Heart left ventricle (tissue), 16 donors: ENCODE measurements at regions of chr6 and their contacts with region 1.

Region 1: DNA sequence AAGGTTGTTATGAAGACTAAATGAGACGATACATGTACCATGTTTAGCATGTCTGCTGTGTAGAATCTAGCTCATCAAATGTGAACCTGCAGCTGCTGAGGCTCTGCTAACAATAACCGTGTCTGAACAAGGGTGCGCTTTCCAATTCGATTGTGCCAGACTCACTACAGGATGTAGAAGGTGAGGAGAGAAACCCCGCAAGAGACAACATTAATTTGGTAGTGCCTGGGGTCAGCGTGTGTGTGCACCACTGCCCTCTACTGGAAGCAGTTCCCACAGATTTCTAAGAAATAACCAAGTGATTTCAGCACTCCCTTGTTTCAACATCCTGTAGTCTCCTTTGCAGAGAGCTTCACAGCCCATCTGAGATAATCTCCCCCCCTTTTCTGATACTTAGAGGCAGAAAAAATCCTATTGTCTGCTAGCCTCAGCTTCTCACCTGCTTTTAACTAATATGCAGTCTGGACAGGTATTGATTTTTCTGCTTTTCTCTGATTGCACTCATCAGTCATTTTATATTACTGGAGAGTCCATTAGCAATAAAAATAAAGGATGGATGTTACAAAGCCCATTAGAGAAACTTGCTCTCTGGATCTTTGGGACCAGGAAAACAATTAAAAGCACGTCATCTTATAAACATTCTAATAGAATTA is 96.7 kb upstream of the BACH2 start:
- DNase-seq: peak in 3 of 5 donors; percentile 43 to 53 (median 51)
- ATAC-seq: peak; percentile 62 to 77 (median 72)
- H3K4me3 ChIP-seq: no peak overlapping the region
- H3K27ac ChIP-seq: no peak overlapping the region
- H3K4me1 ChIP-seq: peaks cover 0 to 11% (median 0%) of the 10 kb centered on the region in 12 donors
- H3K27me3 ChIP-seq: no peaks in the 10 kb centered on the region
- CTCF ChIP-seq: peak; percentile 67 to 84 (median 76)
- POLR2A ChIP-seq: no peak

Region 2: DNA sequence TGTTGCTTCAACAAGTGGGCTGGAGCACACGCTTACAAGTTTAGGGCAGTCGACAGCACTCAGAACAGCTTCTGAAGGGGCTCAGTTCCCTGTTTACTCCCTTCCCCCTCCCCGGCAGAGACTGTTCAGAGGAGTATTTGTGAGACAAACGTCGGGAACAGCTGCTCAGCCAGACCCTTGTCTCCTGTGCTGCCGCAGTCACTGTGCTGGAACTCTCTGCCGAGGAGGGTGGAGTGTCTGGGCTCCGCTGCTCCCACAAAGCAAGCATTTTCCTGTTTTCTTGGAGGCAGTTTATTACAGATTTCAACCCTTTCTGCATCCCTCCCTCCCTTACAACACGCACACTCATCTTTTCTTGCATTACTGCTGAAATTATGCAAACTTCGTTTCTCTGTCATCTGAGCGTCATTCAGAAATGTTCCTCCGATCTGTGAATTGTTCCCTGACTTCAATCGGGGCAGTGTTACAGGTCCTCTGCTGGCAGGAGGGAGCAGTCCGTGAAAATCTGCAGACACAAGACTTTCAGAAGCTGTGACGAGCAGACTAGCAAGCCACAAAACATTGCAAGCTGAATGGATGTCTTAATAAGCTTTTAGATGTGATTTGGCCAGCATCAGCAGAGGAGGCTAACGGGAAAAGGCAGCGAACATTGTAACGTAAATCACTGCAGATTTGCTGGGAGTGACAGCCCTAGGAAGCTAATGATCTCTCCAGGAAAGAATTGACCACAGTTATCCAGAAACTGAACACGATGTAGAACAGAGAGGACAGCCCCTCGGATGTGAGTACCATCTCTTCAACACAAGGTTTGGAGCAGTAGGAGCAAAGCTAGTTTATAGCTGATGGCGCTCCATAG is 831.0 kb before region 1 on chr6:
- intact Hi-C with region 1: no loop called
- DNase-seq: no peak
- ATAC-seq: peak in 2 of 4 donors; percentile 40 to 59
- H3K4me3 ChIP-seq: peak overlapping the region in 9 of 12 donors; percentile 10 to 45 (median 23)
- H3K27ac ChIP-seq: peak overlapping the region in 1 of 12 donors; percentile 9
- H3K4me1 ChIP-seq: peaks cover 0 to 26% (median 4%) of the 10 kb centered on the region in 12 donors
- H3K27me3 ChIP-seq: no peaks in the 10 kb centered on the region
- CTCF ChIP-seq: no peak
- POLR2A ChIP-seq: no peak

Region 3: GRCh38 chr6:89940225-89941027 is 452.9 kb before region 1 on chr6:
- intact Hi-C with region 1: loop called in 4 of 10 experiments (anchors 1 to 10 kb)
- DNase-seq: peak in 4 of 5 donors; percentile 56 to 60 (median 59)
- ATAC-seq: peak; percentile 83 to 92 (median 90)
- H3K4me3 ChIP-seq: no peak overlapping the region
- H3K27ac ChIP-seq: no peak overlapping the region
- H3K4me1 ChIP-seq: peaks cover 0 to 8% (median 0%) of the 10 kb centered on the region in 12 donors
- H3K27me3 ChIP-seq: no peaks in the 10 kb centered on the region
- CTCF ChIP-seq: peak; percentile 46 to 81 (median 70)
- POLR2A ChIP-seq: no peak

Region 4: GRCh38 chr6:90098001-90098531 is 295.3 kb before region 1 on chr6:
- intact Hi-C with region 1: loop called in 4 of 10 experiments (anchors 5 to 10 kb)
- DNase-seq: peak in 4 of 5 donors; percentile 29 to 57 (median 50)
- ATAC-seq: peak; percentile 85 to 94 (median 88)
- H3K4me3 ChIP-seq: no peak overlapping the region
- H3K27ac ChIP-seq: peak overlapping the region in 11 of 12 donors; percentile 44 to 84 (median 68)
- H3K4me1 ChIP-seq: peaks cover 0 to 43% (median 22%) of the 10 kb centered on the region in 12 donors
- H3K27me3 ChIP-seq: no peaks in the 10 kb centered on the region
- CTCF ChIP-seq: peak in 11 of 12 donors; percentile 3 to 66 (median 42)
- POLR2A ChIP-seq: no peak

Region 5: DNA sequence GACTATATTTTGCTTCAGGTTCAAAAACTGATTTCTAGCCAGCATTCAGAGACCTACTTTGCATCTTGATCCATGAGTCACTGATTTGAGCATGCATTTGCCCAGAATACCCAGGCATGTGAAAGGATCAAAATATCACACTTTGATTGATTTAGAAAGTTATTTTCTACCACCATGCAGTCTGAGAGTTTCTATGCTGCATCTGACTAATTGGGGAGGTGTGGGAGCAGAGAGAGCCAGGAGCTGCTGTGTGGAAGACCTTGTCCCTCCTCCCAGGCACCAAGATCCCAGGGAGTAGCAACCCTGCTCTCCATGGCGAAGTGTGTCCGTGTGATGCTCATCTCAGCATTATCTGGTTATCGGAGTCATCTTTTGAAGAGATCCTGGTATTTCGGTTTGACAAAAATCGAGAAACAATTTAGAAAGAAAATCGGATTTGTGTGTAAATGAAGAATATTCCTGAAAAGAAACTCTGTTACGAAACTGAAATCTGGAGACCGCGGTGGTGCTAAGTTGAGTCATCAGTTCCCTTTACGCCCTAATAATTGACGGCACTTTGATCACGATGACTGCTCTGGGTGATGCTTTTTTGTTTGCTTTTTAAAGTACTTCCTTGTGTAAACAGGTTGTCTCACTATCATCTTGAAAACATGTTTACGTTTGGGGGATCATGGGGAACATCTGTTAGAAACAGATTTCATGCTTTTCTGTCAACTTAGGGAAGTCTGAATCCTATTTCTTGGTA is 290.1 kb before region 1 on chr6:
- intact Hi-C with region 1: loop called in 4 of 10 experiments (anchors 5 to 10 kb)
- DNase-seq: no peak
- ATAC-seq: no peak
- H3K4me3 ChIP-seq: peak overlapping the region in 1 of 12 donors; percentile 16
- H3K27ac ChIP-seq: no peak overlapping the region
- H3K4me1 ChIP-seq: peaks cover 0 to 52% (median 4%) of the 10 kb centered on the region in 12 donors
- H3K27me3 ChIP-seq: no peaks in the 10 kb centered on the region
- CTCF ChIP-seq: no peak
- POLR2A ChIP-seq: no peak

Region 6: DNA sequence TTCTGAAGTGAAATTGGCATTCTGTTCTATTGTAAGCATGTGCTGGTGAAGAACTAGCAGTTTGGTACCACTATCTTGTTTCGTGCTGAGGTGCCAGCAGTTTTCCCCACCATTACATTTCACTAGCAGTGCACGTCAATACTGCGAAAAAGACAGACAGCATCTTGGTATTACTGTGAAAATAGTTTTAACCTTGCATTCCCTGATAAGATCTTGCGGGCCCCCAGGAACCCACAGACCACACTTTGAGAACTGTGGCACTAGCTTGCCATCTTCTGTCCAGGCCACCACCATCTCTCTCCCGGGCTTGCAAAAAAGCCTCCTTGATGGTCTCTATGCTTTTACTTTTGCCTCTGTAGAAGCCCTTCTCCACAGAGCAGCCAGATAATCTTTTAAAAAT is 282.4 kb before region 1 on chr6:
- intact Hi-C with region 1: loop called in 4 of 10 experiments (anchors 10 kb)
- DNase-seq: no peak
- ATAC-seq: no peak
- H3K4me3 ChIP-seq: no peak overlapping the region
- H3K27ac ChIP-seq: no peak overlapping the region
- H3K4me1 ChIP-seq: peaks cover 0 to 12% (median 0%) of the 10 kb centered on the region in 12 donors
- H3K27me3 ChIP-seq: no peaks in the 10 kb centered on the region
- CTCF ChIP-seq: no peak
- POLR2A ChIP-seq: no peak

Region 7: GRCh38 chr6:90478789-90479602 is 85.6 kb after region 1 on chr6:
- intact Hi-C with region 1: loop called in 8 of 10 experiments (anchors 1 to 10 kb)
- DNase-seq: peak; percentile 83 to 93 (median 85)
- ATAC-seq: peak; percentile 97 to 100 (median 99)
- H3K4me3 ChIP-seq: no peak overlapping the region
- H3K27ac ChIP-seq: no peak overlapping the region
- H3K4me1 ChIP-seq: peaks cover 0 to 10% (median 2%) of the 10 kb centered on the region in 12 donors
- H3K27me3 ChIP-seq: no peaks in the 10 kb centered on the region
- CTCF ChIP-seq: peak; percentile 86 to 97 (median 92)
- POLR2A ChIP-seq: no peak

Region 8: DNA sequence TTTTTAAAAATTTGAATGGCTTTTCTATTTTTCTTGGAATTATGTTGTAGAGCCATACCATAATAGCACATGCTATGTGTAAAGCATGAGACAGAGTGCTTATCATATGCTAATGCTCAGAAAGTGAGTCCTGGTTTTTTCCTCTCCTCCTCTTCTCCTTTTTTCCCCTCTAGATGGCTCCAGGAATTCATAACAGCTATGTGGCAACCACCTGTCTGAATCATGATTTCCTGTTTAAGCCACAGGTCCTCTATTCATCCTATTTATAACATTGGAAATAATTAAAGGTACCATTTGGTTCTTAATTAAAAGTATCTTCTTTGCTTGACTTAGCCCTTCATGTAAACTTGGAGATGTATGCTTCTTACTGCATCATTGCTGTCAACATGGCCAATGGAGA is 453.5 kb after region 1 on chr6:
- intact Hi-C with region 1: no loop called
- DNase-seq: no peak
- ATAC-seq: no peak
- H3K4me3 ChIP-seq: no peak overlapping the region
- H3K27ac ChIP-seq: no peak overlapping the region
- H3K4me1 ChIP-seq: no peaks in the 10 kb centered on the region
- H3K27me3 ChIP-seq: no peaks in the 10 kb centered on the region
- CTCF ChIP-seq: no peak
- POLR2A ChIP-seq: no peak